ENCODE measurements at regions of chr4 and their contacts with region 1.

Region 1: GRCh38 chr4:159201168-159201567 is 98.3 kb downstream of the RAPGEF2 start:
- DNase-seq: no peak
- H3K4me3 ChIP-seq: no peak overlapping the region
- H3K27ac ChIP-seq: no peak overlapping the region
- H3K4me1 ChIP-seq: no peaks in the 10 kb centered on the region
- H3K27me3 ChIP-seq: no peaks in the 10 kb centered on the region
- CTCF ChIP-seq: no peak

Region 2: DNA sequence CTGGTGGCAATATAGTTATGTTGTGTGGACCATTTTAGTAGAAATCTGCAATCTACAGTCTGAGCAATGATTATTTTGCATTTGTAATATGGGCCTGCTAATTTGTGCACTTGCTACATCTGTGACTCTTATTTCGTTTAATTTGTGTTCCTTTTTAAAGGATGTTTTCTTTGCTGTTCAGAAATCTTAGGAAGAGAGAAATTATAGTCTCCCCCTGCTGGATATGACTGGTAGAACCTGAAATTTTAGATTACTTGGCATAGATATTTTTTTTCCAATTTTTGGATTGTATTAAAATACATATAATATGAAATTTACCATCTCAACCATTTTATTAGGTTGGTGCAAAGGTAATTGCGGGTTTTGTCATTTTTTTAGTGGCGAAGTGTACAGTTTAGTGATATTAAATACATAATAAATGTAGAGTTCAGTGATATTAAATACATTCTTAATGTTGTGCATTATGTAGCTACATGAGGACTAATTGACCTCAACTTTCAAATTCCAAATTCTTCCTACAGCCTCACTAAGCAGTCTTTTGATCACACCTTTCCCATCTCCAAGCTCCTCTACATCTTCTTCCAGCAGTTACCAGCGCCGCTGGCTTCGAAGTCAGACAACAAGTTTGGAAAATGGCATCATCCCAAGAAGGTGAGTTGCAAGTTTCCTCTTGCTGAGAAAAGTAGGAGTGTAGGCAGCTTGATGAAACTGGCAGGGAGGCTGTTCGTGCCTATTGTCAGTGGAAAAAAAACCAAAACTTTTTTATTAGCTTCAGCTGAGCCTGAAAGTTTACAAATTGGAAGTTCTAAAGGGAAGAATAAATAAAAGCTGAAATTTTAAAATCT is 350.1 kb before region 1 on chr4:
- intact Hi-C with region 1: loop called (anchors 5 kb)
- DNase-seq: no peak
- H3K4me3 ChIP-seq: no peak overlapping the region
- H3K27ac ChIP-seq: no peak overlapping the region
- H3K4me1 ChIP-seq: no peaks in the 10 kb centered on the region
- H3K27me3 ChIP-seq: no peaks in the 10 kb centered on the region
- CTCF ChIP-seq: peak; percentile 68

Region 3: GRCh38 chr4:159069922-159070321 is 131.2 kb before region 1 on chr4:
- intact Hi-C with region 1: no loop called
- DNase-seq: no peak
- H3K4me3 ChIP-seq: no peak overlapping the region
- H3K27ac ChIP-seq: no peak overlapping the region
- H3K4me1 ChIP-seq: no peaks in the 10 kb centered on the region
- H3K27me3 ChIP-seq: no peaks in the 10 kb centered on the region
- CTCF ChIP-seq: no peak

Region 4: DNA sequence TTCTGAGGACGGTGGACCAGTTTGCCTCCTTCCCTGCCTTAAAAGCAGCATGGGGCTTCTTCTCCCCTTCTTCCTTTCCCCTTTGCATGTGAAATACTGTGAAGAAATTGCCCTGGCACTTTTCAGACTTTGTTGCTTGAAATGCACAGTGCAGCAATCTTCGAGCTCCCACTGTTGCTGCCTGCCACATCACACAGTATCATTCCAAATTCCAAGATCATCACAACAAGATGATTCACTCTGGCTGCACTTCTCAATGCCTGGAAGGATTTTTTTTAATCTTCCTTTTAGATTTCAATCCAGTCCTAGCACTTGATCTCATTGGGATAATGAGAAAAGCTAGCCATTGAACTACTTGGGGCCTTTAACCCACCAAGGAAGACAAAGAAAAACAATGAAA is 157.1 kb after region 1 on chr4:
- intact Hi-C with region 1: no loop called
- DNase-seq: no peak
- H3K4me3 ChIP-seq: no peak overlapping the region
- H3K27ac ChIP-seq: no peak overlapping the region
- H3K4me1 ChIP-seq: no peaks in the 10 kb centered on the region
- H3K27me3 ChIP-seq: no peaks in the 10 kb centered on the region
- CTCF ChIP-seq: no peak

Measured in colonic mucosa (tissue), 4 donors.